OCI-LY7 (cell line): ENCODE measurements at regions of chr17 and their contacts with region 1.

Region 1: GRCh38 chr17:75345514-75346167 is 56.4 kb upstream of the SLC25A19 start:
- DNase-seq: peak; percentile 98
- H3K4me3 ChIP-seq: peak overlapping the region; percentile 75
- H3K27ac ChIP-seq: peak overlapping the region; percentile 94
- H3K4me1 ChIP-seq: peaks cover 85% of the 10 kb centered on the region
- CTCF ChIP-seq: peak; percentile 27; the same call in 1 of the 2 replicates

Region 2: GRCh38 chr17:75295201-75296158 is 50.2 kb before region 1 on chr17:
- CTCF ChIA-PET with region 1: no interaction called
- POLR2A ChIA-PET with region 1: interaction called, 100 read pairs
- intact Hi-C with region 1: loop called (anchors 1 kb)
- DNase-seq: peak; percentile 94
- H3K4me3 ChIP-seq: peak overlapping the region; percentile 62
- H3K27ac ChIP-seq: peak overlapping the region; percentile 95
- H3K4me1 ChIP-seq: peaks cover 90% of the 10 kb centered on the region
- CTCF ChIP-seq: no peak

Region 3: GRCh38 chr17:75364078-75364477 is 18.4 kb after region 1 on chr17:
- CTCF ChIA-PET with region 1: interaction called, 4 read pairs
- POLR2A ChIA-PET with region 1: interaction called, 58 read pairs
- intact Hi-C with region 1: loop called (anchors 1 kb)
- DNase-seq: no peak
- H3K4me3 ChIP-seq: peak overlapping the region; percentile 44
- H3K27ac ChIP-seq: peak overlapping the region; percentile 64
- H3K4me1 ChIP-seq: peaks cover 97% of the 10 kb centered on the region
- CTCF ChIP-seq: no peak

Region 4: DNA sequence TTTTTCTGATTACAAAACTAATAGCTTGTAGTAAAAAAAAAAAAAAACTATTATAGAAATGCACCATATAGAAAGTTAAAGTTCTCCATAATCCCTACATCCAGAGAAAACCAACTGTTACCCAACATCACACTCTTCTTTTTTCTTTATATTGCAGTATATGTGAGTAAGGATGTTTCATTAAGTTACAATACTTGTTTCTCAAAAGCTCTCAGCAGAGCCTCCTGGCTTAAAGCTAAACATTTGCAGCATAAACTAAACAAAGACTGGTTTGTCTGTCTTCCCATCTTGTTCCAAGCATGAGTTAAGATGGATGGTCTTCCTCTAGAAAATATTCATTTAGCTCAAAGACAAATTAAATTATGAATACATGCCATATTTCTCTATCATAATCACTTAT is 34.7 kb after region 1 on chr17:
- CTCF ChIA-PET with region 1: interaction called, 3 read pairs
- POLR2A ChIA-PET with region 1: interaction called, 42 read pairs
- intact Hi-C with region 1: no loop called
- DNase-seq: no peak
- H3K4me3 ChIP-seq: no peak overlapping the region
- H3K27ac ChIP-seq: no peak overlapping the region
- H3K4me1 ChIP-seq: peaks cover 69% of the 10 kb centered on the region
- CTCF ChIP-seq: no peak

Region 5: GRCh38 chr17:75400326-75400939 is 54.8 kb after region 1 on chr17:
- CTCF ChIA-PET with region 1: interaction called, 5 read pairs
- POLR2A ChIA-PET with region 1: interaction called, 43 read pairs
- intact Hi-C with region 1: loop called (anchors 1 kb)
- DNase-seq: no peak
- H3K4me3 ChIP-seq: no peak overlapping the region
- H3K27ac ChIP-seq: no peak overlapping the region
- H3K4me1 ChIP-seq: peaks cover 48% of the 10 kb centered on the region
- CTCF ChIP-seq: no peak

Region 6: DNA sequence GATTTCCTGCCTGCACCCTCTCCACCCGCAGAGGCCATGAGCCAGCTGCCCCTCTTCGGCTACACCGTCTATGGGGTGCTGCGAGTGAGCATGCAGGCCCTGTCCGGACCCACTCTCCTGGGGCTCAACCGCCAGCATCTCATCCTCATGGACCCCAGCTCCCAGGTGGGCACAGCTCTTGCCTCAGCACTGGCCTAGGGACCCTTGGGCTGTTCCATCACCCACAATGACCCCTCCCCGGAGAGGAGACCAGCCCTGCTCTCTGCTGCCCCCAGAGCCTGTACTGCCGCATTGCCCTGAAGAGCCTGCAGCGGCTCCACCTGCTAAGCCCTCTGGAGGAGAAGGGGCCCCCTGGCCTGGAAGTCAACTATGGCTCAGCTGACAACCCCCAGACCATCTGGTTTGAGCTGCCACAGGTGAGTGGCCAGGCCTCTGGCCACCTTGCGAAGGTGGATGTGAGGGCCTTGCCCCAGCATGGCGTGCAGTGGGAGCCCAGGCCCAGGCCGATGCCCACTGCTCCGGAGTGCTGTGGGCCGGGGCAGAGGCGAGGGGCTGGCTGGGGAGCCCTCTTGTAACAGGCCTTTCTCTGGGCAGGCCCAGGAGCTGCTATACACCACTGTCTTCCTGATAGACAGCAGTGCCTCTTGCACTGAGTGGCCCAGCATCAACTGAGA is 280.3 kb after region 1 on chr17:
- CTCF ChIA-PET with region 1: no interaction called
- POLR2A ChIA-PET with region 1: no interaction called
- intact Hi-C with region 1: no loop called
- DNase-seq: peak; percentile 73
- H3K4me3 ChIP-seq: no peak overlapping the region
- H3K27ac ChIP-seq: no peak overlapping the region
- H3K4me1 ChIP-seq: peaks cover 12% of the 10 kb centered on the region
- CTCF ChIP-seq: peak; percentile 97